ENCODE measurements at regions of chr16 and their contacts with region 1.

Region 1: DNA sequence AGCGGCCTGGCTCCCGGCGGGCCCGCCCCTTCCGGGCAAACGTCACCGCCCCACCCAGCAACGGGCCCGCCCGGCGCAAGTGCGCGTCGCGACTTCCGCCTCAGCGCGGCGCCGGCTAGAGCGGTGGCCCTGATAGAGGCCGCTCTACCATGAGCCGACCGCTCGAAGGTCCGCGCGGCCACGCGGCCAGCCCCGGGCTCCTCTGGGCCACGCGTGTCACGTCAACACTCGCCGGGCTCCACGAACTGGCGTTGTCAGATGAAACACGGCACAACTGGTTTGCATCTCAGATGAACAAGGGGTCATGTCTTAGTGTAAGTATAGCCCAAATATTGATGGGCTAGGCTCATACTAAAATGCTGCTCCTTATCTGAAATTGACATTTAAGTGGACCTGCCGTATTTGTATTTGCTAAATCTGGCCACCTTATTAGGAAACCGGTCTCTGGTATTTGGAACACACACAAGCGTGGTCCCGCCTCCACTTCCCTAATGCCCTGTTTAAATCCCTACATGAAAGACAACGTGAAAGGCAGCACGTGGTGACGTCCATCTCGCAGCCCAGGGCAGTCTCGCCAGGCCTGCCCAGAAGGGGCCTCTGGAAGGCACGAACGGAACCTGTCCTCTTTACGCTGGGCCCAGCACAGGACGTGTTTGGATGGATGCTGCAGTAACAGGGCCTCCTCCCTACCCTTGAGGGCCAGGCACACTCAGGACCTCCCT is at the start of gene ZNF598:
- DNase-seq: peak; percentile 74
- H3K4me3 Mint-ChIP-seq: peak within 1 kb of the TSS; percentile 97
- H3K27ac Mint-ChIP-seq: peak within 1 kb of the TSS; percentile 92
- H3K4me1 Mint-ChIP-seq: peaks cover 22% of the 10 kb centered on the region
- H3K27me3 Mint-ChIP-seq: no peaks in the 10 kb centered on the region
- total RNA-seq, gene ZNF598: 82.0 and 83.3 TPM in 2 replicates

Region 2: DNA sequence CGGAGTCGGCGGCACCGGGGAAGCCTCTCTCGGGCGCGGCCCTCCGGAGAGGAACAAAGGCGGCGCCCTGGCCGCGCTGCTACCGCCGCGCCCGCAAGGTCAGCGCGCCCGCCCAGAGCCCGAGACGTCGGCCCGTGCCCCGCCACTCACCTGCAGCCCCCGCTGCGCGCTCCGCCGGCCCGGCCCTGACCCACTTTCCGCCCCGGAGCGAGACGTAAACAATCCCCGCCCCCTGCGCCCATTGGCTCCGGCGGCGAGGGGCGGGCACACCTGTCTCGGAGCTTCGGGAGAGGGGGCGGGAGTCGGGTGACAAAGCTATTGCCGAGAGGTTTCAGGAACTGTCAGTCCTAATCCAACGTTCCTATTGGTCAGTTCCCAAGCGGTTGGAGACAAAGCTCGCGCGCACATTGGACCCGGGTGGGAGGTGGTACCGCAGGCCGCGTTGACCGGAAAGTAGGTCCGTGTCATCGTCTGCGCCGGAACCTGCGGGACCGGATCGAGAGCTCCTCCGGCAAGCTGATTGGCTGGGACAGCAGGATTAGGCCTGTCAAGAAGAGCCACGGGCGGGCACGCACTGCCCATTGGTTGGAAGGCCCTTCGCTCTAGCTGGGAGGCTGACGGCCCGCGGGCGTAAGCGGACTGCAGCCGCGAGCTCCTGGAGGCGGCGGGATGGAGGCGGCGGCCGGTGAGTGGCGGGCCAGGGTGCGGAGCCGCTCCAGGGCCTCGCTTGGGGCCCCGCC is 227.4 kb before region 1 on chr16 and contains the starts of genes NUBP2 and SPSB3:
- intact Hi-C with region 1: no loop called
- DNase-seq: peak; percentile 99
- H3K4me3 Mint-ChIP-seq: peak within 1 kb of the TSS; percentile 90
- H3K27ac Mint-ChIP-seq: peak within 1 kb of the TSS; percentile 83
- H3K4me1 Mint-ChIP-seq: peaks cover 11% of the 10 kb centered on the region
- H3K27me3 Mint-ChIP-seq: no peaks in the 10 kb centered on the region
- total RNA-seq, gene NUBP2: 64.5 and 66.7 TPM in 2 replicates
- total RNA-seq, gene SPSB3: 27.1 and 28.3 TPM in 2 replicates

Region 3: DNA sequence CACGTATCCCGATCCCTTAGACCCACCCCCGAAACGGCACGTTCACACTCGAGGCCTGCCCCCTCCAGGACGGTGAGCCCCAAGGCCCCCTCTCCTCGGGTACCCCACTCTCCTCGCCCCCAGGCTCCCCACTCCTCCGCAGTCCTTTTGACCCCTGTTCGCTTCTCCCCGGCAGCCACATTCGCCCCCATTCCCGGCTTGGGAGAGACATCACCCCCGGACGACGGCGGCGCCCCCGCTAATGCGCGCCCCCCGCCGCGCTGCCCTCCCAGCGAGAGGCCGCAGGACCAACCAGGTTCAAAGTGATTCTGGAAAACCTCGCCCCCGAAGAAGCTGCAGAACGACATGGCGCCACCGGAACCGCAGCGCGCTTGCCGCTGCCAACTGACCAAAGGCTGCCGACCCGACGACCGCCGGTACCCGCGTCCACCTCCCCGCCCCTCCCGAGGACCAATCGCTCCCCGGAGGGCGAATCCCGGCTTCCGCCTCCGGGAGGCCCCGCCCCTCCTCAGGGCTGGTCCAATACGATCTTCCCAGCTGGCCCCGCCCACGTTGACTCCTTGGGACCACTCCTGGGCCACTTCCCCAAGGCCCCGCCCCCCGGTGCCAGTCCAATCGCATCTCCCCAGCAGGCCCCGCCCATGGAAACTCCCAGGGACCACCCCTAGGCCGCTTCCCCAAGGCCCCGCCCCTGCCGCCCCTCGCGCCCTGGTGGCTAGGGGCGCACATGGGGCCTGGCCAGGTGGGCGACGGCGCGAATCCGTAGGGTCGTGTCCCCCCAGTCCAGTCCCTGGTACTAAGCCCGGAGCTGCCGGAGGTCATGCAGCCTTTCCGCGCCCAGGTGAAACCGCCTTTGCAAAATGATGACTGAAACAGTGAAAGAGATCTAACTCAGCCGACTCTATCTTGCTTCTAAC is 66.9 kb before region 1 on chr16 and contains the start of gene MSRB1:
- intact Hi-C with region 1: no loop called
- DNase-seq: peak; percentile 99
- H3K4me3 Mint-ChIP-seq: peak within 1 kb of the TSS; percentile 90
- H3K27ac Mint-ChIP-seq: peak within 1 kb of the TSS; percentile 82
- H3K4me1 Mint-ChIP-seq: peaks cover 15% of the 10 kb centered on the region
- H3K27me3 Mint-ChIP-seq: no peaks in the 10 kb centered on the region
- total RNA-seq, gene MSRB1: 33.5 and 35.0 TPM in 2 replicates

Region 4: DNA sequence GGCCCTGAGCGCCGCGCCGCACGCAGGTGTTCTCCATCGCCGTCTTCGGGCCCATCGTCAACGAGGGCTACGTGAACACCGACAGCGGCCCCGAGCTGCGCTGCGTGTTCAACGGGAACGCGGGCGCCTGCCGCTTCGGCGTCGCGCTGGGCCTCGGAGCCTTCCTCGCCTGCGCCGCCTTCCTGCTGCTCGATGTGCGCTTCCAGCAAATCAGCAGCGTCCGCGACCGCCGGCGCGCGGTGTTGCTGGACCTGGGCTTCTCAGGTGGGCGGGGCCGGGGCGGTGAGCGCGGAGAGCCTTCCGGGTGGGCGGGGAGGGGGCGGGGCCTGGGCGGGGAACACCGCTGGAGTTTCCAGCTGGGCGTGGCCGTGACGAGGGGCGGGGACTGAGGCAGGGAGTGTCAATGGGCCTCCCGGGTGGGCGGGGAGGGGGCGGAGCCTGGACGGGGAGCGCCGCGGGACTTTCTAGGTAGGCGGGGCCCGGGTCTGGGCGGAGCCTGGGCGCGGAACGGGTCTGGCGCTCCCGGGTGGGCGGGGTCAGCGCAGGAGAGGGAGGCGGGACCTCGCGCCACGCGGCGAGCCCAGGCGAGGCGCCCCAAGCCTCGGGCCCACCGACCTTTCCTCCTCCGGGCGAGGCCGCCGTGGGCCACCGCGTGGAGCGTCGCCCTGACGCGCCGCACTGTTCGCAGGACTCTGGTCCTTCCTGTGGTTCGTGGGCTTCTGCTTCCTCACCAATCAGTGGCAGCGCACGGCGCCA is 17.8 kb before region 1 on chr16:
- intact Hi-C with region 1: loop called (anchors 1 kb)
- DNase-seq: peak; percentile 90
- H3K4me3 Mint-ChIP-seq: peak overlapping the region; percentile 52
- H3K27ac Mint-ChIP-seq: peak overlapping the region; percentile 42
- H3K4me1 Mint-ChIP-seq: peaks cover 11% of the 10 kb centered on the region
- H3K27me3 Mint-ChIP-seq: peaks cover 10% of the 10 kb centered on the region

Region 5: GRCh38 chr16:2047330-2048115 is 37.6 kb after region 1 on chr16 and contains the starts of genes NTHL1 and TSC2:
- intact Hi-C with region 1: loop called (anchors 5 kb)
- DNase-seq: peak; percentile 94
- H3K4me3 Mint-ChIP-seq: peak within 1 kb of the TSS; percentile 94
- H3K27ac Mint-ChIP-seq: peak within 1 kb of the TSS; percentile 71
- H3K4me1 Mint-ChIP-seq: peaks cover 10% of the 10 kb centered on the region
- H3K27me3 Mint-ChIP-seq: no peaks in the 10 kb centered on the region
- total RNA-seq, gene NTHL1: 43.5 and 54.7 TPM in 2 replicates
- total RNA-seq, gene TSC2: 89.7 and 92.8 TPM in 2 replicates